HCT116 (cell line): ENCODE measurements at regions of chr19 and their contacts with region 1.

Region 1: DNA sequence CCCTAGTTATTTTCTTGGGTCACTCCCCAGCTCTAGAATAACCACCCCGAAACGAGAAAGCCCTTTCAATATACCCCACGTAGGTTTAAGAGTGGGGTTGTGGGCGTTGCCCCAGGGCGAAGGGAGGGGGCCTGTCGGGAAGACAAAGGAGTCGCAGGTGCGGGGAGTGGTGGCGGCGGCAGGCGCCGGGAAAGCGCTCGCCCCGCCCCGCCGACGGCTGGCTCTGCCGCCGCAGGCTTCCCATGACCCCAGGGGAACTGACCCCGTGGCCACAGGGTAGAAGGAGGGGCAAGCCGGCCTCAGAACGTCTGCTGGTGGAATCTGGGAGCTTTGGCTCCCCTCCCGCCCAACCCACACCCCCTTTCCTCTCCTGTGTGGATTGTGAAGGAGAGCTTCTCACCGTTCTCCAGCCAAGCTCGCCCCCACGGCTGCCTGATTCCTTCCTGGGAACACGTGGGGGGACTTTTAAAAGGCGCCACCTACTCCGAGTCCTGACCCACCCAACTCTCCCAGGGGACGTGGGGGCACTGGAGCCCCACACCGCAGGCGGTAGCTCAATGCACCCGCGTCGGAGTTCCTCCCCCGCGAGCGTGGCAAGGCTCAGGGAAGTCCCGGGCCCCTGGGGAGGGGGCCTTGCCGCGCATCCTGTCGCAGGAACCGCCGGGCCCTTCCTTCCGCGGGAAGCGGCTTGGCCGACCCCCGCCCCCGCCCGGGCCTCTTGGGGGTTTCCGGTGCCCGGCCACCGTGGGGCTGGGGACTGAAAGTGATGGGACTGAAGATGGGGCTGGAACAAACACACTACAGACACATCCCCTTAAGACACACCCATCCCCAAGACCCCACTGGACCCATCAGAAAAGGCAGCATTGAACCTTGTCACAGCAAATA is 5.5 kb downstream of the IER2 start:
- DNase-seq: no peak
- ATAC-seq: peak; percentile 24
- H3K4me3 ChIP-seq: peak overlapping the region; percentile 81 to 94
- H3K27ac ChIP-seq: peak overlapping the region; percentile 99
- H3K4me1 ChIP-seq: peaks cover 33 to 67% of the 10 kb centered on the region in 2 experiments
- H3K27me3 ChIP-seq: no peaks in the 10 kb centered on the region
- CTCF ChIP-seq: no peak
- POLR2A ChIP-seq: peak; percentile 20
- RAD21 ChIP-seq: no peak

Region 2: DNA sequence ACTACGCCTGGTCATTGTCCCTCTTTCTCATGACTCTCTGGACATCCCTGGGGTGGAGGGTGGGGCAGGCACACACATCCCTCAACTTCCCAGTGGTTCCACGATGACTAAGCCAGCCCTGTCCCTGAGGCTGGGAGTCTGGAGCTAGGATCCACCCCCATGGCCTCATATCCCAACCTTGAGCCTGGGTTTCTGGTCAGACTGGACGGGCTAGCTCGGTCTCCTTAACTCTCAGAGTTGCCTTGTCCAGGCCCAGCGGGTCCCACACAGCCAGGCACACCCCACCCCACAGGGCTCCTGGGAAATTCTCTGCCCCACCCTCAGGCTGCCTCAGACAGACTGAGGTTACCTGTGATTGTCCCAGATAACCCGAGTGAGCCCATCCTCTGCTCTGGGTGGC is 14.1 kb after region 1 on chr19:
- CTCF ChIA-PET with region 1: interaction called, 4 read pairs
- POLR2A ChIA-PET with region 1: interaction called, 63 read pairs
- RAD21 ChIA-PET with region 1: no interaction called
- intact Hi-C with region 1: no loop called
- DNase-seq: peak; percentile 91
- ATAC-seq: peak; percentile 68
- H3K4me3 ChIP-seq: peak overlapping the region; percentile 11 to 27; a peak in 2 of 4 replicates
- H3K27ac ChIP-seq: peak overlapping the region; percentile 99
- H3K4me1 ChIP-seq: peaks cover 85 to 91% of the 10 kb centered on the region in 2 experiments
- H3K27me3 ChIP-seq: no peaks in the 10 kb centered on the region
- CTCF ChIP-seq: no peak
- POLR2A ChIP-seq: no peak
- RAD21 ChIP-seq: no peak

Region 3: DNA sequence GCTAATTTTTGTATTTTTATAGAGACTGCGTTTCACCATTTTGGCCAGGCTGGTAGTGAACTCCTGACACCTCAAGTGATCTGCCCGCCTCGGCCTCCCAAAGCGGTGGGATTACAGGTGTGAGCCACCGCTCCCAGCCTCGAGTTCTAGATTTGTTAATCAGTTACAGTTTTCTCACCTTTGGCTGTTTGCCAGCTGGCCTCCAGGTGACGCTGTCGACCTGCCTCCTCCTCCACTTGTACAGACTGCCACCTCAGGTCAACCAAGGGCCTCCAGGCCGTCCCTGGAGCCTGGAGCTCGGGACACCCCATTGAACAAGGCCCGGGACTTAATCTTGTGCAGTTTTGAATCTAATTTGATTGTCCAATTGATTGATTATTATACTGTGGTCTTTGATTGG is 40.0 kb after region 1 on chr19:
- CTCF ChIA-PET with region 1: interaction called, 5 read pairs
- POLR2A ChIA-PET with region 1: interaction called, 4 read pairs
- RAD21 ChIA-PET with region 1: no interaction called
- intact Hi-C with region 1: loop called (anchors 2 kb)
- DNase-seq: no peak
- ATAC-seq: peak; percentile 70
- H3K4me3 ChIP-seq: no peak overlapping the region
- H3K27ac ChIP-seq: peak overlapping the region; percentile 36
- H3K4me1 ChIP-seq: peaks cover 28 to 38% of the 10 kb centered on the region in 2 experiments
- H3K27me3 ChIP-seq: no peaks in the 10 kb centered on the region
- CTCF ChIP-seq: peak; percentile 30 to 64 (median 46); a peak in 4 of 6 replicates
- POLR2A ChIP-seq: no peak
- RAD21 ChIP-seq: peak; percentile 60; the same call in 1 of the 2 replicates

Region 4: GRCh38 chr19:13234518-13234917 is 78.8 kb after region 1 on chr19:
- CTCF ChIA-PET with region 1: no interaction called
- POLR2A ChIA-PET with region 1: no interaction called
- RAD21 ChIA-PET with region 1: no interaction called
- intact Hi-C with region 1: loop called (anchors 1 kb)
- DNase-seq: peak; percentile 33
- ATAC-seq: peak; percentile 93
- H3K4me3 ChIP-seq: no peak overlapping the region
- H3K27ac ChIP-seq: no peak overlapping the region; the same call in 1 of the 2 replicates
- H3K4me1 ChIP-seq: peaks cover 4 to 11% of the 10 kb centered on the region in 2 experiments; a peak in 3 of 4 replicates
- H3K27me3 ChIP-seq: no peaks in the 10 kb centered on the region
- CTCF ChIP-seq: peak; percentile 94 to 99 (median 94)
- POLR2A ChIP-seq: no peak
- RAD21 ChIP-seq: peak; percentile 84